B cell (primary cell): ENCODE measurements at regions of chr12 and their contacts with region 1.

Region 1: GRCh38 chr12:76417116-76417515 is 68.9 kb upstream of the BBS10 start:
- DNase-seq: no peak
- ATAC-seq: no peak
- H3K4me3 ChIP-seq: no peak overlapping the region
- H3K4me3 Mint-ChIP-seq: no peak overlapping the region
- H3K27ac ChIP-seq: no peak overlapping the region
- H3K27ac Mint-ChIP-seq: no peak overlapping the region
- H3K4me1 ChIP-seq: no peaks in the 10 kb centered on the region
- H3K4me1 Mint-ChIP-seq: peaks cover 2% of the 10 kb centered on the region
- H3K27me3 ChIP-seq: no peaks in the 10 kb centered on the region
- H3K27me3 Mint-ChIP-seq: no peaks in the 10 kb centered on the region
- CTCF ChIP-seq: no peak

Region 2: GRCh38 chr12:76337583-76337982 is 79.5 kb before region 1 on chr12:
- CTCF ChIA-PET with region 1: no interaction called
- POLR2A ChIA-PET with region 1: no interaction called
- intact Hi-C with region 1: no loop called
- DNase-seq: no peak
- ATAC-seq: no peak
- H3K4me3 ChIP-seq: no peak overlapping the region
- H3K4me3 Mint-ChIP-seq: no peak overlapping the region
- H3K27ac ChIP-seq: no peak overlapping the region
- H3K27ac Mint-ChIP-seq: no peak overlapping the region
- H3K4me1 ChIP-seq: no peaks in the 10 kb centered on the region
- H3K4me1 Mint-ChIP-seq: no peaks in the 10 kb centered on the region
- H3K27me3 ChIP-seq: peaks cover 0 to 3% (median 0%) of the 10 kb centered on the region in 4 experiments
- H3K27me3 Mint-ChIP-seq: peaks cover 12% of the 10 kb centered on the region
- CTCF ChIP-seq: no peak

Region 3: GRCh38 chr12:76450690-76451089 is 33.6 kb after region 1 on chr12:
- CTCF ChIA-PET with region 1: no interaction called
- POLR2A ChIA-PET with region 1: no interaction called
- intact Hi-C with region 1: loop called (anchors 5 kb)
- DNase-seq: no peak
- ATAC-seq: no peak
- H3K4me3 ChIP-seq: no peak overlapping the region
- H3K4me3 Mint-ChIP-seq: no peak overlapping the region
- H3K27ac ChIP-seq: no peak overlapping the region
- H3K27ac Mint-ChIP-seq: no peak overlapping the region
- H3K4me1 ChIP-seq: no peaks in the 10 kb centered on the region
- H3K4me1 Mint-ChIP-seq: peaks cover 9% of the 10 kb centered on the region
- H3K27me3 ChIP-seq: no peaks in the 10 kb centered on the region
- H3K27me3 Mint-ChIP-seq: no peaks in the 10 kb centered on the region
- CTCF ChIP-seq: no peak